ENCODE measurements at regions of chr1 and their contacts with region 1.

Region 1: GRCh38 chr1:224051086-224051406 is 62.9 kb upstream of the FBXO28 start:
- DNase-seq: no peak
- ATAC-seq: no peak
- H3K4me3 ChIP-seq: no peak overlapping the region
- H3K4me3 Mint-ChIP-seq: no peak overlapping the region
- H3K27ac ChIP-seq: no peak overlapping the region
- H3K27ac Mint-ChIP-seq: no peak overlapping the region
- H3K4me1 ChIP-seq: peaks cover 2% of the 10 kb centered on the region
- H3K4me1 Mint-ChIP-seq: peaks cover 4% of the 10 kb centered on the region
- H3K27me3 ChIP-seq: peaks cover 0 to 4% of the 10 kb centered on the region in 2 experiments
- H3K27me3 Mint-ChIP-seq: peaks cover 23% of the 10 kb centered on the region
- CTCF ChIP-seq: no peak

Region 2: DNA sequence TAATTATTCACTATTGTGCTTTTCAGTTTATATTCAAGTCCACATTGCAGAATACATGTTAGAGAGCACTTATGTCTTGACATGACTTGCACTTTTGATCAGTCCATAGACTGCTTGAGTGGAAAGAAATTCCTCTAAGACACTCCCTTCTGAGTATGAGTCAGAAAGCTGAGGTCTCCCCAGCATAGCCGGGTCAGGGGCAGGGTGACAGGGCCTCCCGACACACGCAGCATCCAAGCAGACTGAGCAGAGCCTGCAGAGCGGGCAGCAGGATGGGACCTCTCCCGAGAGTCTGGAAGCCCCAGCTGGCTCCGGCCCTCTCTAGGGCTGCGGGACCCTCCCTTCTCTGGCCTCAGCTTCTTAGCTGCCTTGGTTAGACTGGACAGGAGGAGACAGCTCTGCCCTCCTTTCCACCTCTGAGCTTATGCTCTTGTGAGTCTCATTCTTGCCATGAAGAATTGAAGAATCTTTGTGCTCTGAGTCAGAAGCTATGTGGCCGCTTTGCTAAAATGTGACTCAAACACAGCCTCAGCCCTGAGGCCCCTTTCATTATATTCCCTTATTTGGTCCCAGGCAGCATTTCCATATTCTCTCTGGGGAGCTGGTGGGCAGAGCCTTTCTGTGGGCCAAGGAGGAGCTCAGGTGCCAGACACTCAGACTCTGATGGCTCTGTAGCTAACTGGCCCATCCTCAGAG is 350.0 kb before region 1 on chr1:
- CTCF ChIA-PET with region 1: no interaction called
- POLR2A ChIA-PET with region 1: no interaction called
- intact Hi-C with region 1: loop called in 1 of 2 experiments (anchors 2 kb)
- DNase-seq: no peak
- ATAC-seq: no peak
- H3K4me3 ChIP-seq: no peak overlapping the region
- H3K4me3 Mint-ChIP-seq: no peak overlapping the region
- H3K27ac ChIP-seq: no peak overlapping the region
- H3K27ac Mint-ChIP-seq: no peak overlapping the region
- H3K4me1 ChIP-seq: peaks cover 8% of the 10 kb centered on the region
- H3K4me1 Mint-ChIP-seq: peaks cover 8% of the 10 kb centered on the region
- H3K27me3 ChIP-seq: no peaks in the 10 kb centered on the region
- H3K27me3 Mint-ChIP-seq: no peaks in the 10 kb centered on the region
- CTCF ChIP-seq: no peak

Region 3: GRCh38 chr1:224884361-224884801 is 833.3 kb after region 1 on chr1:
- CTCF ChIA-PET with region 1: no interaction called
- POLR2A ChIA-PET with region 1: no interaction called
- intact Hi-C with region 1: no loop called
- DNase-seq: no peak
- ATAC-seq: no peak
- H3K4me3 ChIP-seq: no peak overlapping the region
- H3K4me3 Mint-ChIP-seq: no peak overlapping the region
- H3K27ac ChIP-seq: no peak overlapping the region
- H3K27ac Mint-ChIP-seq: no peak overlapping the region
- H3K4me1 ChIP-seq: no peaks in the 10 kb centered on the region
- H3K4me1 Mint-ChIP-seq: no peaks in the 10 kb centered on the region
- H3K27me3 ChIP-seq: no peaks in the 10 kb centered on the region
- H3K27me3 Mint-ChIP-seq: peaks cover 16% of the 10 kb centered on the region
- CTCF ChIP-seq: no peak

Measured in CD4-positive, alpha-beta T cell (primary cell).